ENCODE measurements at regions of chr6 and their contacts with region 1.

Region 1: DNA sequence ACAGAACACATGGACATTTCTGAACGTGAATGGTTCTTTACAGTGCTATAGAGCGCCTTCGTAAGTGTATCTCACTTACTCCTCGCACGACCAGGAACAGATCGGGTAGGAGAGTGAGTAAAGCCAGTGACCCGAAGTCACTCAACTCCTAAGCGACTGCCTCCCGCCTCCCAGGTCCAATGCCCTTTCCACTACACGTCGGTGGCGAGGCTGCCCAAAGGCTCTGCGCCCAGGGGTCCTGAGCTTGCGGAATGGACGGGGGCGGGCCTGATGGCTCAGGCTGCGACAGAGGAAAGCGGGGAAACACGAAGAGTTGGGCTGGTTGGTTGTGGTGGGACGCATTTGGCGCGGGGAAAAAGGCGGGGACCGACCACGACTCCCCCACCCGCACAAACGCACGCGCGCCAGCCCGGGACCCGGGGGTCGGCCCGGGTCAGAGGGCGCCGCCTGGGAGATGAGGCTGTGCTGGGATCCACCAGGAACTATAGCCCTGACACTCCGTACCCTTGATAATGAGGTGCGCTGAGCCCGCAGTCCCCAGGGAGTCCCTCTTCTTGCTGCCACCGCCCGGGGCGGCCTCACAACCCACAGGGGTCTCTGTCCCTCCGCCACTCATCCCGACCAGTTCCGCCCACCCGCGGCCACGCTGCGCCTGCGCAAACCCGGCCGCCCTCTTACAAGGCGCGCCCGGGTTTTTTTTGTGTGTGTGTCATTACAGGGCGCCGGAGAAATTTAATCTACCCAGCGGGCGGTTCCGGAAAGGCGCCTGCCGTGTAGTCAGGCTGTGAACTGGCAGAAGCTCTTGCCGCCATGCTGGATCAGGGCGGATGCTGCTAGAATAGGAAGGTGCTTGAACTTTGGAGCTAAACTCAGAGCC is at the start of gene BLOC1S5:
- DNase-seq: peak; percentile 88 to 99 (median 94)

Region 2: DNA sequence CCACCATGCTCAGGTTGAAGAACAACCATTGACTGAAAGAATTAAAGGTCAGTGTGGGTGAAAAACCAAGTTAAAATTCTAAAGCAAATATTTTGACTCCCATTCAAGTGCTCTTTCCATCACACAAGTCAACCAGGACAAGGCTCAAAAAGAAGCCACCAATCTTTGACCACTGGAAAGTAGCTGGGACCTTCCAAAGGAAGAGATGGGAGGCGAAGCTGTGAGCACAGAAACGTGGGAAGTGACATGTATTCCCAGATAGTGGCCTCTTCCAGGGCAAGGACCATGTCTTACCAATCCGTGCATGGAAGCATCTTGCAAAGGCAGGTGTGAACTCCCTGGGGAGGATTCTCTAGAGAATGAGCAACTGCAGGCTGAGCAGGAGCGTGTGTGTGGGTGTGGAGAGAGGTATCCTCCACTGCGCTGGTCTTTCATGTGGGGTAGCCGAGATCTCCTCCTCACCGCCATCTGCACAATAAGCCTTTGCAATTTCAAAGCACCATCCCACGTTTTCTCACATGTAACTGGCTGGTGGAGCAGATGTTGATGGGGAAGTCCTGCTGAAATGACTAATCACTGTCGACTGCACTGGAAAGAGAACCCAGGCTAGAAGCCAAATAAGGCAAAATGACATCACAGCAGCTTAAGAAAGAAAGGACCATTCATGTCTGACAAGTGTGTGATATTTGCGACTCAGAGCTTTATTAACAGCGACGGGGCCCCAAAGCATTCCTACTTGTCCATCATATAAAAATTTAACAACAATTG is 1145.6 kb before region 1 on chr6:
- intact Hi-C with region 1: no loop called
- DNase-seq: peak in 8 of 10 donors; percentile 39 to 91 (median 57)

Region 3: DNA sequence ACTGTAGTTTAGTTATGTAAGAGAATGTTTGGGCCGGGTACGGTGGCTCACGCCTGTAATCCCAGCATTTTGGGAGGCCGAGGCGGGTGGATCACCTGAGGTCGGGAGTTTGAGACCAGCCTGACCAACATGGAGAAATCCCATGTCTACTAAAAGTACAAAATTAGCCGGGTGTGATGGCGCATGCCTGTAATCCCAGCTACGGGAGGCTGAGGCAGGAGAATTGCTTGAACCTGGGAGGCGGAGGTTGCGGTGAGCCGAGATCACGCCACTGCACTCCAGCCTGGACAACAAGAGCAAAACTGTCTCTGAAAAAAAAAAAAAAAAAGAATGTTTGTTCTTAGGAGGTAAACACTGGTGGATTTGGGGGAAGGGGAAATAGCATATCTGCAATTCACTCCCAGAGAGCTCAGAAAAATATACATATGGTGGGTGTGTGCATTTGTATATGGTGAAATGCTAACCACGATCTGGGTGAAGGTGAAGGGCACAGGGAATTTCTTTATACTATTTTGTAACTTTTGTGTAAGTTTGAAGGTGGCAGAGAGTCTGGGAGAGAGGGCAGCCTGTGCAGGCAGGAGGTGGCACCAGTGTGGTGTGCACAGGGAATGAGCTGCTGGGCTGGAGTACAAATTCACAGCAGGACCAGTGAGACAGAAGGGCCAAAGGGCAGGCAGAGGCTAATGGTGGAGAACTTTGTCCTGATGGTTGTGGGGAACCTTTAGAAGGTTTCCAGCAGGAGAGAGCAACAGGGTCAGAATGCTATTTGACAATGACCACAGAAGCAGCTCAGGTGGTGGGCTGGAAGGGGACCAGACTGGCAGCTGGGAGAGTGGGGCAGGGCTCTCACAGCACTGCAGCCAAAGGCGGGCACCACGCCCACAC is 793.4 kb before region 1 on chr6:
- intact Hi-C with region 1: loop called (anchors 10 kb)
- DNase-seq: peak in 1 of 10 donors; percentile 70

Region 4: DNA sequence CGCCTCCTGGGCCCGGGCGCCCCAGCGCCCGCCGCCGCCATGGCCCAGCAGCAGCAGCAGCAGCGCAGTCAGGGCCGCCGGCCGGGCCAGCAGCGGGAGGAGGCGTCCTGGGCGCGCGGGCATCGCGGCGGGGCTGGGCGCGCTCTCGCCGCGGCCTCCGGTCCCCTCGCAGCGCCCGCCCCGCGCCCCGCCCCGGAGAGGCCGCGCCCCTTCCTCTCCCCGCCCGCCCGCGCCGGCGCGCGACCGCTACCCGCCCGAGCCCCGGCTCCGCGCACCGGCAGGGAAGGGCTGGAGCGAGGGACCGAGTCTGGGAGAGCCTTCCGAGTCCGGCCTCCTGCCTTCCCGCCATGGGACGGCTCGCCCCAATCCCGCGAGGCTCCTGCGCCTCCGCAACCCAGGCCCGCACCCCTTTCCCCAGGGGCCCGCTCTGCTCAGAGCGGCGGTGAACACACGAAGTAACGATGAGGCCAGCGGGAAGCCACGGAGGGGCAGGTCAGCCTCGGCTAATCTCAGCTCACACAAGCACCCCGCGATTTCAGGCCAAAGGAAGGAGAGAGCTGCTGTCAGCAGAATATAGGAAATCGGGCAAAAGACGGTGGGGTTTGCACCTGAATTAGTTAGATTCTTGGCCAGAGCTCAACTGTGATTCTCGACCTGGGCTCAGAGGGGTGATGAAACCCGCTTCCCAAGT is 153.2 kb before region 1 on chr6 and contains the start of gene TXNDC5:
- intact Hi-C with region 1: loop called (anchors 5 kb)
- DNase-seq: peak; percentile 64 to 97 (median 78)

Region 5: DNA sequence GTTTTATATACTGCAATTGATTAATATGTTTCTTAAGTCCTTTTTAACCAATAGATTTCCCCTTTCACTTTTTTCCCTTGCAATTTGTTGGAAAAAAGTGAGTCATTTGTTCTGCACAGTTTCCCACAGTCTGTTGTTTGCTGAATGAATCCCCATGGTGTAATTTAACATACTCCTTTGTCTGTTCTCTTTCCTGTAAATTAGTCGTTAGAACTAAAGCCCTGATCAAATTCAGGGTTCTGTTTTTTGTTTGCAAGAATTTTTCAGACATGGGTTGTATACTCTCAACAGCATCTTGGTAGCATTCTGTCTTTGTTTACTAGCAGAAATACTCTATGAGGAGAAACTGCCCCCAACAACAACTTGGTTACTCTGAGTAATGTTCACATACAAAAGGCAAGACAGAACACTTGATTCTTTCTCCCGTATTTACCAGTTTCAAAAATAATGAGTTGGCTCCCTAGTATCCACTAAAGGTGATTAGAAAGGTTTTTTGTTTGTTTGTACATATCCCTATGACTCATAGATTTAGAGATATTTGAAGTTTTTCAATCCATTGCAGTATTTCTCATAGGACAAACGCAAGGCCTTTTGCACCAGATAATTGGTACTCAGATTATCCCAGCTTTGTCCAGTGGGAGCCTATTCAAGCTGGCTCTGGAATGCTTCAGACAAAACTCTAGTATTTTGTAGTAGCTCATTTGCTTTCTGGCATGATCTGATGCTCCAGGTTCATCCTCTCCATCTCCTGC is 16.3 kb before region 1 on chr6:
- intact Hi-C with region 1: no loop called
- DNase-seq: no peak

Region 6: GRCh38 chr6:8102122-8102958 is 38.3 kb after region 1 on chr6 and contains the start of gene EEF1E1:
- intact Hi-C with region 1: loop called (anchors 1 kb)
- DNase-seq: peak; percentile 92 to 99 (median 97)

Region 7: DNA sequence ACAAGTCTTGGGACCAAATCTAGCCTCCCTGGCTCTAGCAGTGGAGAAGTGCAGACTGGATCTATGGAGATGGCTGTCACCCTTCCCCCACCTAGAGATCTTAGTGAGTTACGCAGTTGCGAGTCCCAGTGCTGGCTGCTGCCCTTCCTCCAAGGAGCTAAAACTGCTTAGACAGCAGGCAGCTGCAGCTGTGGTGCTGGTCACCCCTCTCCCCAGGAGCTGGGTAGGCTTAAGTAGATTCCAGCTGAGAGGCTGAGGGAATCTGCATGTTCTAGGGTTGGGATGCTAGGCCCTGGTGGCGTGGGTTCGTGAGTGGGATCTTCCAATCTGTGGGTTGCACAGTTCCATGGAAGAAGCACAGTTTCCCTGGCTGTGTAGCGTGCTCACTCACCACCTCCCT is 251.2 kb after region 1 on chr6:
- intact Hi-C with region 1: no loop called
- DNase-seq: peak in 1 of 10 donors; percentile 55